H1 (cell line): ENCODE measurements at regions of chr6 and their contacts with region 1.

Region 1: DNA sequence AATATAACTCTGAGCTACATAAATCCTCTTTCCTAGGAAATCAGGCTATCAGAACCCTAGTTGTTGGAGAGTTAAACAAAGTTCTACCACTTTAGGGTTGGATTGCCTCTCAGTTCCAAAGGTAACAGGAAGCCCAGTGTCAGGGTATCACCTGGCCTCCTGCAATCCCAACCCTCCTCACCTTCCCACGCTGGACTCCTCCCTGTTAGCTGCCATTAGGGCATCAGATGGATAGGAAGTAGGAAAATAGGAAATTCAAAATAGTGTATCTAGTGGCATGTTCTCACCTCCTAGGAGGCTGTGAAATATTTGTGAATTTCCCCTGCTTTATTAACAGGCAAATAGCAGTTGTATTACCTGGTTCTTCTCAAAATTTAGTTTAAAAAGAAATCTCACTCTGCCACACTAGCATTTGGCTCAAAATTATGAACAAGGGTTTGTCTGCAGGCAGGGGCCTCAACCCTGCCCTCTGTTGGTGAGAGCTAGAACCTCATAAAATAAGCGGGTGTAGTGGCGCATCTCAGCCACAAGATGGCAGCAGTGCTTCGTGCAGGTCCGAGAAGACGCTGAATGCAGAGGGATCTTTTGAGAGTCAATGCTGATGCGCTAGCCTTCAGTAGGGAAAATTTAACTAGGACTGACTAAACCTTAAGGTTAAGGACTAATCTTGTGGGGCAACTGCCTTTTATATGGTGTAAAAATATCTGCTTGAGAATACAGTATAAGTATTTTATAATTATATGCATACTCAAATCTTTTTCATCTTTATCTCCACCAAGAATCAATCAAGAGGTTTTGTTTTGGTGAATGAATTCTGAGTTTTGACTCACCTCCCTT is 209.8 kb upstream of the KCNQ5 start:
- DNase-seq: peak; percentile 62 to 94
- H3K4me3 ChIP-seq: no peak overlapping the region
- H3K27ac ChIP-seq: no peak overlapping the region
- H3K4me1 ChIP-seq: no peaks in the 10 kb centered on the region
- H3K27me3 ChIP-seq: no peaks in the 10 kb centered on the region
- CTCF ChIP-seq: peak; percentile 99 to 100 (median 100)
- EP300 ChIP-seq: no peak
- POLR2A ChIP-seq: no peak
- RAD21 ChIP-seq: peak; percentile 100

Region 2: GRCh38 chr6:72080260-72080941 is 331.7 kb before region 1 on chr6:
- CTCF ChIA-PET with region 1: no interaction called
- POLR2A ChIA-PET with region 1: no interaction called
- DNase-seq: no peak
- H3K4me3 ChIP-seq: no peak overlapping the region
- H3K27ac ChIP-seq: no peak overlapping the region
- H3K4me1 ChIP-seq: peaks cover 0 to 1% (median 0%) of the 10 kb centered on the region in 4 experiments; a peak in 3 of 7 replicates
- H3K27me3 ChIP-seq: no peaks in the 10 kb centered on the region
- CTCF ChIP-seq: no peak
- EP300 ChIP-seq: no peak
- POLR2A ChIP-seq: no peak
- RAD21 ChIP-seq: no peak; a peak in 1 of 4 replicates

Region 3: GRCh38 chr6:72425003-72425681 is 13.1 kb after region 1 on chr6:
- CTCF ChIA-PET with region 1: interaction called, 59 read pairs
- POLR2A ChIA-PET with region 1: no interaction called
- DNase-seq: no peak
- H3K4me3 ChIP-seq: no peak overlapping the region
- H3K27ac ChIP-seq: no peak overlapping the region
- H3K4me1 ChIP-seq: no peaks in the 10 kb centered on the region
- H3K27me3 ChIP-seq: no peaks in the 10 kb centered on the region
- CTCF ChIP-seq: no peak
- EP300 ChIP-seq: no peak
- POLR2A ChIP-seq: no peak
- RAD21 ChIP-seq: no peak

Region 4: DNA sequence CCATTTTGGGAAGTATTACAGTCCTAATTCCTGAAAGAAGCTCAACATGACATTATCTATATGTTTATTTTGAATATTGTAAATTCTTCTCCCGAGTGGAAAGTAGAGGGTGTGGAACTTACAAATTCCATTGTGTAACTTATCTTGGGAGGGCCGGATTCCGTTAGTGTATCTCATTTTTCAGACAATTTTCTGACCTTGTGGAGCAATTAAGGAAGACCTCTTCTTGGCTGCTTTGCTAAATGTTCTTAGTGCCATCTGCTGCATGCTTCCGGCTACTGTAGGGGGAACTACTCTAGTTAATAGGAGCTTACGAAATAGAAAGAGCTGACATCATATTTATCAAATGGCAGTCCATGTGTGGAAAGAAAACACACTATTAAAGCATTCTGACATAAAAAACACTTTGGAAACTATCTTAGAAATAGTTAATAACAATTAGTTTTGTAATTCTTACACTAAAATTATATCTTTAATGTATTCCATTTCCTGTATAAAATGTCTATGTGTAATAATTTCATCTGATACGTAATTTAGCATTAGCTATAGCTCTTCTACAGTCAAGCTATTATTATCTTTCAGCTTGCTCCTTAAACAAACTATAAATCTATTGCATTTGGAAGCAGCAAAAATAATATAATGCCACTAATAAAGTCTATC is 168.3 kb after region 1 on chr6:
- CTCF ChIA-PET with region 1: interaction called, 158 read pairs
- POLR2A ChIA-PET with region 1: interaction called, 4 read pairs
- DNase-seq: peak in 1 of 2 experiments; percentile 9
- H3K4me3 ChIP-seq: no peak overlapping the region
- H3K27ac ChIP-seq: no peak overlapping the region
- H3K4me1 ChIP-seq: no peaks in the 10 kb centered on the region
- H3K27me3 ChIP-seq: no peaks in the 10 kb centered on the region
- CTCF ChIP-seq: peak in 2 of 3 experiments; percentile 62 to 83; a peak in 3 of 4 replicates
- EP300 ChIP-seq: no peak
- POLR2A ChIP-seq: no peak
- RAD21 ChIP-seq: peak; percentile 90 to 92

Region 5: DNA sequence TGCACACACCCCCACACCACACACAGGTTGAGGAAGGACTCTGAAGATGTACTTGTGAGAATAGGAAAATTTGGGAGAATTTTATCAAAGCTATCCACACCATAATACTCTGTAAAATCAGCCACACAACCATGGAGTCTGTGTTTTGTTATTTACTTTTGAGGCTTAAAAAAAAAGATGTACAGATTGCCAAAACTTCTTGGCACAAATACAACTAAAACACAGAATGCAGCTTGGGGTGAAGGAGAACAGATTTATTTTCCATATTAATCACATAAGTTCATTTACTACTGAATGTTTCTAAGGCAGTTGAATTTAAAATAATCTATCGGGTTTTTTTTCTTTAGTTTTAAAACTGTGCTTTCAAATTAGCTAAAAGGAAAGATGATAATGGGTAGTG is 177.0 kb after region 1 on chr6:
- CTCF ChIA-PET with region 1: interaction called, 158 read pairs
- POLR2A ChIA-PET with region 1: no interaction called
- DNase-seq: no peak
- H3K4me3 ChIP-seq: no peak overlapping the region
- H3K27ac ChIP-seq: no peak overlapping the region
- H3K4me1 ChIP-seq: no peaks in the 10 kb centered on the region
- H3K27me3 ChIP-seq: no peaks in the 10 kb centered on the region
- CTCF ChIP-seq: no peak
- EP300 ChIP-seq: no peak
- POLR2A ChIP-seq: no peak
- RAD21 ChIP-seq: no peak

Region 6: GRCh38 chr6:72622094-72622940 is 210.2 kb after region 1 on chr6:
- CTCF ChIA-PET with region 1: interaction called, 17 read pairs
- POLR2A ChIA-PET with region 1: no interaction called
- DNase-seq: peak in 1 of 2 experiments; percentile 78
- H3K4me3 ChIP-seq: peak overlapping the region; percentile 25 to 78 (median 62)
- H3K27ac ChIP-seq: no peak overlapping the region
- H3K4me1 ChIP-seq: peaks cover 0 to 17% (median 6%) of the 10 kb centered on the region in 4 experiments; a peak in 4 of 7 replicates
- H3K27me3 ChIP-seq: peaks cover 25 to 54% (median 45%) of the 10 kb centered on the region in 4 experiments
- CTCF ChIP-seq: peak in 2 of 3 experiments; percentile 25 to 36; a peak in 3 of 4 replicates
- EP300 ChIP-seq: no peak
- POLR2A ChIP-seq: no peak
- RAD21 ChIP-seq: peak; percentile 8 to 12; a peak in 3 of 4 replicates